ENCODE measurements at regions of chr7 and their contacts with region 1.

Region 1: GRCh38 chr7:97064967-97065587 is 40.4 kb upstream of the DLX5 start:
- DNase-seq: no peak
- H3K4me3 ChIP-seq: no peak overlapping the region
- H3K27ac ChIP-seq: no peak overlapping the region
- H3K4me1 ChIP-seq: no peaks in the 10 kb centered on the region
- H3K27me3 ChIP-seq: no peaks in the 10 kb centered on the region
- CTCF ChIP-seq: peak; percentile 45

Region 2: GRCh38 chr7:95916573-95917297 is 1148.3 kb before region 1 on chr7:
- intact Hi-C with region 1: loop called (anchors 5 kb)
- DNase-seq: peak; percentile 80
- H3K4me3 ChIP-seq: no peak overlapping the region
- H3K27ac ChIP-seq: no peak overlapping the region
- H3K4me1 ChIP-seq: no peaks in the 10 kb centered on the region
- H3K27me3 ChIP-seq: no peaks in the 10 kb centered on the region
- CTCF ChIP-seq: peak; percentile 86

Region 3: DNA sequence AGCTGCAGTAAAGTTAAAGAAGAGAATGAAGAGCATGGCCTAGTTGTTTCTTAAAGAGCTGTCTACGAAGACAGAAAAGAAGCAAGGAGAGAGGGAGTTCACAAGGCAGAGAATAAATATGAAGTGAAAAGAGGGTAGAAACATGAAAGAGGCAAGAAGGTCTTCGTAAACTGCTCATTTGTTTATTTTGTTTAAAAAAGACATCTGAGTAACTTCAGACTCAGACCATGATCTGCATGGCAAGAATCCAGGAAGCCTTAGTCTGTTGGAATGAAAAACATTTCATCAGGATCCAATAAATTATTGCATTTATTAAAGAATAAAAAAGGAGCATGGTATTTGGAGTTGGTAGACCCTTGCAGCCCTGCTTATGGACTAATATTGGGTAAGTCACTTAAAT is 506.5 kb before region 1 on chr7:
- intact Hi-C with region 1: no loop called
- DNase-seq: no peak
- H3K4me3 ChIP-seq: no peak overlapping the region
- H3K27ac ChIP-seq: no peak overlapping the region
- H3K4me1 ChIP-seq: no peaks in the 10 kb centered on the region
- H3K27me3 ChIP-seq: no peaks in the 10 kb centered on the region
- CTCF ChIP-seq: no peak